Gastrocnemius medialis (tissue), 4 donors: ENCODE measurements at regions of chr12 and their contacts with region 1.

Region 1: DNA sequence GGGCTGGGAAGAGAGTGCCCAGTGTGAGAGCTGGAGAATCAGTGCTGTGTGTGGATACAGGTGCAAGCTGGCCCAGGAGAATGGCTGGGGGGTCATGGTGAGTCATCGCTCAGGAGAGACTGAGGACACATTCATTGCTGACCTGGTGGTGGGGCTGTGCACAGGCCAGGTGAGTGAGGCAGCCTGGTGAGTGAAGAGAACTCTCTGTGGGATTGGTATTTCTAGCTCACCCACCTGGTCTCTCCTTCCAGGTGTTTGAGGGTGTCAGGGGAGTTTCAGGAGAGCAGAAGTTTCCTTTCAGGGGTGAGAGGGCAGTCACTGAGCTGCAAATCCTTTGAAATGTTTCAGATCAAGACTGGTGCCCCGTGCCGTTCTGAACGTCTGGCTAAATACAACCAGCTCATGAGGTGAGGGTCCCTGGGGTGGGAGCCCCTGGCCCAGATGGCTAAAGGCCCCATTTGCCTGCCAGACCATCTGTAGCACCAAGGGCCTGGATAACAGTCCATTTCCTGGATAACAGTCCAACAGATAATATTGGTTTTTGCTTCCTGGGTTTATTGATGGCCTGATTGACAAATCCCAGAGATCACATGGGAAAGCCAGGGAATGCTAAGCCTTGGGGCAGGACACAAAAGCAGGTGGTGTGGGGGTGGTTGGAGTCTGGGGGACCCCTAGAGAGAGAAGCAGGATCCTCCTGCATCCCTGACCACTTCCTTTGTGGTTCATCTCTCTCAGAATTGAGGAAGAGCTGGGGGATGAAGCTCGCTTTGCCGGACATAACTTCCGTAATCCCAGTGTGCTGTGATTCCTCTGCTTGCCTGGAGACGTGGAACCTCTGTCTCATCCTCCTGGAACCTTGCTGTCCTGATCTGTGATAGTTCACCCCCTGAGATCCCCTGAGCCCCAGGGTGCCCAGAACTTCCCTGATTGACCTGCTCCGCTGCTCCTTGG is 5.5 kb upstream of the ATN1 start:
- DNase-seq: no peak
- ATAC-seq: no peak
- H3K4me3 ChIP-seq: no peak overlapping the region
- H3K27ac ChIP-seq: no peak overlapping the region
- H3K4me1 ChIP-seq: peaks cover 30% of the 10 kb centered on the region in 2 donors
- H3K27me3 ChIP-seq: no peaks in the 10 kb centered on the region
- CTCF ChIP-seq: no peak
- POLR2A ChIP-seq: no peak

Region 2: GRCh38 chr12:6873094-6874014 is 48.9 kb before region 1 on chr12 and contains the start of gene SPSB2:
- in situ Hi-C with region 1: no loop called
- intact Hi-C with region 1: no loop called
- DNase-seq: peak; percentile 91 to 93
- ATAC-seq: peak; percentile 81 to 82
- H3K4me3 ChIP-seq: peak within 1 kb of the TSS; percentile 84 to 96 (median 90)
- H3K27ac ChIP-seq: peak within 1 kb of the TSS; percentile 82 to 100 (median 90)
- H3K4me1 ChIP-seq: peaks cover 29% of the 10 kb centered on the region in 2 donors
- H3K27me3 ChIP-seq: no peaks in the 10 kb centered on the region
- CTCF ChIP-seq: no peak
- POLR2A ChIP-seq: peak; percentile 75 to 79
- total RNA-seq, gene SPSB2: 4.6 to 10.0 (median 5.0) TPM

Region 3: GRCh38 chr12:7018350-7019042 is 96.2 kb after region 1 on chr12 and contains the start of gene LPCAT3:
- in situ Hi-C with region 1: no loop called
- intact Hi-C with region 1: loop called (anchors 1 kb)
- DNase-seq: peak; percentile 94 to 98
- ATAC-seq: peak; percentile 92 to 95
- H3K4me3 ChIP-seq: peak within 1 kb of the TSS; percentile 81 to 95 (median 84)
- H3K27ac ChIP-seq: peak within 1 kb of the TSS; percentile 91 to 98 (median 95)
- H3K4me1 ChIP-seq: peaks cover 35 to 36% of the 10 kb centered on the region in 2 donors
- H3K27me3 ChIP-seq: no peaks in the 10 kb centered on the region
- CTCF ChIP-seq: peak; percentile 79 to 93 (median 89)
- POLR2A ChIP-seq: peak; percentile 81 to 88
- total RNA-seq, gene LPCAT3: 19.4 to 42.8 (median 36.7) TPM

Region 4: DNA sequence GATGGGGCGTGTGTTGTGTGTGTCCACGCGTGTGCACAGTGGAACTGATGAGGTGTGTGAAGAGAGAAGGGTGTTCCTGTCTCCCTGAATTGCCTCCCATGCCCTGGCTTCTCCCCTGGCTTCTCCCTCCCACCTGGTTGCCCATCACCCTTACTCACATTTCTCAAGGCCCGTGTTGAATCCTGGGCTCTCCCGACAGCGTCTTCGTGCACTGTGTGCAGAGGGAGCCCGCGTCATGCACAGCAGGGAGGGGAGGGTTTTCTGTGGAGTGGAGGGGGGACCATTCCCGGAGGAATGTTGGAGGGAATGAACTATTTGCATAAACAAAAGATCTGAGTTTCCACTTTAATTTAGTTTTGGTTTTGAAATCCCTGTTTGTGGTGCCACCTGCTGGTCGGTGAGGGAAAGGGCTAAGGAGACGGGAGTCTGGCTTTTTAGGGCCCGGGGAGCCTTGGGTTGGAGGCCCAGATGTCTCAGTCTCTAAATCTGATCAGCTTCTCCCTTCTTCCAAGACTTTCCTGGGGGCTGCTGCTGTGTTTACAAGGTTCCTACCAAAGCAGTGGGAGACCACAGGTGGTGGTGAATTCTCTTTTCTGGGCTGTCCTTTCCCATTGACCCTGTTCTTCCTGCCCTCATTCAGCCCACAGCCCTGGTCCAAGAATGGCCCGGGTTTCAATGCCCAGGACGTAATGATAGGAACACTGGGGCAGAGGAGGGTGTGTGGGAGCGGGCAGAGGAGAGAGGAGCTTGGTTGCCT is 170.1 kb after region 1 on chr12 and contains the start of gene C1R:
- in situ Hi-C with region 1: no loop called
- intact Hi-C with region 1: loop called (anchors 5 kb)
- DNase-seq: peak; percentile 50 to 70
- ATAC-seq: peak; percentile 67 to 75
- H3K4me3 ChIP-seq: peak within 1 kb of the TSS; percentile 48 to 78 (median 59)
- H3K27ac ChIP-seq: peak within 1 kb of the TSS; percentile 68 to 80 (median 70)
- H3K4me1 ChIP-seq: peaks cover 8 to 24% of the 10 kb centered on the region in 2 donors
- H3K27me3 ChIP-seq: no peaks in the 10 kb centered on the region
- CTCF ChIP-seq: peak; percentile 75 to 93 (median 88)
- POLR2A ChIP-seq: peak in 1 of 2 donors; percentile 48
- total RNA-seq, gene C1R: 47.5 to 97.8 (median 74.9) TPM

Region 5: DNA sequence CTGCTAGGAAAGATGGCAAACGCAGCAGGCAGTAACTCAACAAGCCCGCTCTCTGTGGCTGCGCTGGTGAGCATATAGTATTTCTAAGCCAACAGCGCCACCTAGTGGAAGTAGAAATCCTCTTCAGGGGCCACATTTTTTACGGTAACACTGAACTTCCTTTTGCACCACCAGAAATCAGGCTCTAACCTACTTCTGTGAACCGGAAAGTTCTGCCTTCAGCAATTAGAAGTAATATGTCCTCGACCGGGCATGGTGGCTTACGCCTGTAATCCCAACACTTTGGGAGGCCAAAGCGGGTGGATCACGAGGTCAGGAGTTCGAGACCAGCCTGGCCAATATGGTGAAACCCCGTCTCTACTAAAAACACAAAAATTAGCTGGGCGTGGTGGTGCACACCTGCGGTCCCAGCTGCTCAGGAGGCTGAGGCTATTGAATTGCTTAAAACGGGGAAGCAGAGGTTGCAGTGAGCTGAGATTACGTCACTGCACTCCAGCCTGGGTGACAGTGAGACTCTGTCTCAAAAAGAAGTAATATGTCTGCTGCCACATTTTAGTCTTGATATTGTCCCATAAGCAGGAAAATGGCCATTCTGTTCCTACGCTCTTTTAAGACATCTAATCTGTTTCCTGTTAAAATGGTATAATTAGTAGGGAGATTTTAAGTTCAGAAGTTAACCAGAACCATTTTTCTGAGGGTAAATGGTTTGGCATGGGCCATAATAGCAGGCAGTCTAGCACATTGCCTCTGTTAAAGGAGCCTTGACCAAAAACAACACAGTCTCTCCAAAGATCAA is 716.7 kb after region 1 on chr12:
- in situ Hi-C with region 1: no loop called
- intact Hi-C with region 1: loop called (anchors 5 kb)
- DNase-seq: peak; percentile 47 to 57
- ATAC-seq: peak; percentile 86 to 91
- H3K4me3 ChIP-seq: no peak overlapping the region
- H3K27ac ChIP-seq: no peak overlapping the region
- H3K4me1 ChIP-seq: no peaks in the 10 kb centered on the region
- H3K27me3 ChIP-seq: peaks cover 0 to 4% (median 0%) of the 10 kb centered on the region in 3 donors
- CTCF ChIP-seq: peak; percentile 82 to 88 (median 84)
- POLR2A ChIP-seq: no peak